ENCODE measurements at regions of chr3 and their contacts with region 1.

Region 1: GRCh38 chr3:124786441-124787241 is 56.4 kb downstream of the UMPS start:
- DNase-seq: no peak
- H3K4me3 ChIP-seq: no peak overlapping the region
- H3K27ac ChIP-seq: peak overlapping the region; percentile 18 to 78 (median 58)
- H3K4me1 ChIP-seq: peaks cover 19 to 78% (median 19%) of the 10 kb centered on the region in 3 donors
- H3K27me3 ChIP-seq: no peaks in the 10 kb centered on the region
- CTCF ChIP-seq: peak in 5 of 6 experiments; percentile 29 to 58 (median 38)
- POLR2A ChIP-seq: no peak

Region 2: GRCh38 chr3:124451630-124452317 is 334.9 kb before region 1 on chr3:
- intact Hi-C with region 1: no loop called
- DNase-seq: no peak
- H3K4me3 ChIP-seq: no peak overlapping the region
- H3K27ac ChIP-seq: no peak overlapping the region
- H3K4me1 ChIP-seq: no peaks in the 10 kb centered on the region
- H3K27me3 ChIP-seq: no peaks in the 10 kb centered on the region
- CTCF ChIP-seq: no peak
- POLR2A ChIP-seq: no peak

Region 3: DNA sequence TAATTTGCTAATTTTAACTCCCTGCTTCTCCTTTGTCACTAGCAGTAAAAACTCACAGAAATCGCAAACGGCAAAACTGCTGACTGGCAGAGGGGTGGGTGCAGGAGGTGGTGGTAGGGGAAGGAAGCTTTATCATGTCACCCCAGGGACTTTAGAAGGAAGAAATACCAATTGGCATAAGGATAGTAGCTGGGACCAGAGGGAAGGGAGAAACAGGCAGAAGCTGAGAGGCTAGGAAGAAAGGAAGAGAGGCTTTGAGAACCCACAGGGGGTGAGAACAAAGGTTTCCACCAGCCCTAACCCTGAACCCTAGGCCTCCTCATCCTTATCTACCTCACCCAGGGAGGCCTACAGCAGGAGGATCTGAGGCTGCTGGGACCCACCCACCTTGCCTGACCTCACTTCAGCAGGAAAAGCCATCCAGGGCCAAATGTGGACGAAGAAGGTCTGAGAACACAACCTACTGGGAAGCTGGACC is 89.8 kb after region 1 on chr3:
- intact Hi-C with region 1: no loop called
- DNase-seq: no peak
- H3K4me3 ChIP-seq: no peak overlapping the region
- H3K27ac ChIP-seq: peak overlapping the region in 3 of 4 donors; percentile 18 to 54 (median 19)
- H3K4me1 ChIP-seq: peaks cover 10 to 57% (median 19%) of the 10 kb centered on the region in 3 donors
- H3K27me3 ChIP-seq: no peaks in the 10 kb centered on the region
- CTCF ChIP-seq: no peak
- POLR2A ChIP-seq: no peak

Region 4: DNA sequence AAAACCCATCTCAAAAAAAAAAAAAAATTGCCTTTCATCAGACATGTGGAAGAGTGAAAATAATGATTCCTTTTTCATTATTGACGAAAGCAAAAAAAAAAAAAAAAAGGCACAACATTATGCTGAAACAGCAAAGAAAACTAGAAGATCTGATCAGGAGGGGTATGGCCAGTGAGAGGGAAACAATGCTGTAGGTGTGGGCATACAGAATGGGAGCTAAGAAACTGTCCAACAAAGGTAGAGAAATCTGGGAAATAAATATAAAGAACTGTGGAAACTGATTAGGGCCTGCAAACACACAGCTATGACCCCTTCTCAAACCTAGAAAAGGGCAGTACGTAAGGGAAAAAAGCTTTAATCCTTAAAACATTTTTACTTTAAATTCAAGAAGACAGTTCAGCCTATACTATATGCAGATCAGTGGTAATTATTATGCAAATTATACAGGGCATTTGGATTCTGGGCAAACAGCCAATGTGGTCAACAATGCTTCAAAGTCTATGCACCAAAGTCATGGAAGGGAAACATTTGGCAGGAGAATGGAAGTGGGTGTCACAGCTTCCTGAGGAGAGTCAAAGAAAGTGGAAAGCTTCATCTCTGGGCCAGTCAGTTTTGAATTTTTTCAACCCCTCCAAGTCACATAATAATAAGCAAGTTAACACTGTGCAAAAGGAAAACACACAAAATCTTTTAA is 494.2 kb after region 1 on chr3:
- intact Hi-C with region 1: loop called (anchors 10 kb)
- DNase-seq: no peak
- H3K4me3 ChIP-seq: no peak overlapping the region
- H3K27ac ChIP-seq: no peak overlapping the region
- H3K4me1 ChIP-seq: peaks cover 0 to 6% (median 0%) of the 10 kb centered on the region in 3 donors
- H3K27me3 ChIP-seq: no peaks in the 10 kb centered on the region
- CTCF ChIP-seq: no peak
- POLR2A ChIP-seq: no peak

Measured in esophagus squamous epithelium (tissue), 5 donors.